HEK293 (cell line): ENCODE measurements at regions of chr15 and their contacts with region 1.

Region 1: DNA sequence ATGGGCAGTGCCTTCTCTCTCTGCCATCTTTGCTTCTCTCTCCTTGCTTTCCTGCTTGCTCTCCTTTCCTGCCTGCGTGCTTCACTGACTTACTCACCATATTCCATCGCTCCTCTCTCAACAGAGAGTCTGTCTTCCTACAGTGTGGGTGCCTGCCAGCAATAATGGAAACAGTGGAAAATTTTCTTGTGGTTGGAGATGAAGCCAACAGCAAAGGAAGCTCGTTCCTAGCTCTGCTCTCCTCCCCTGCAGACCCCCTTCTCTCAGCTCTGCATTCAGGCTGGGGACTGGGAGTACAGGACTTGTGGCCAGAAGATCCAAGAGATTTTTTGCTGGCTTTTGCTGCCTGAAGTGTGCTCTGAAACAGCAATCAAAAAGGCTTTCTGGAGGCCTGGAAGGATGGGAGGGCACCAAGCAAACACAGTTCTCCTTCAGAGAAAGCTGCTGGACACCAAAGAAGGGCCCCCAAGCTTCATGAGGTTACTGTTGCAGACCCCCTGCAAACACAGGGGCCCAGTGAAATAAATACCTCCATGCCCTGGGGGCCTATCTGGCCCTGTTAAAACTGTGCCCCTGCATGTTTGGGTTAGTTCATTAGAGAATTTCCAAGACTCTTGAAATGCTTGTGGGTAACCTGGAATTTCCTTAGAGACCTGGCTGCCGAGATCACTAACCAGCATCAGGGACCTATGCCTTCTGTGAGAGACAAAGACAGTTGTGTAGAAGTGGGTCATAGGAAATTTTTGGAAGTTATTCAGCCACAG is 149.9 kb upstream of the RASGRP1 start:
- H3K4me3 ChIP-seq: no peak overlapping the region
- H3K27ac ChIP-seq: no peak overlapping the region
- H3K4me1 ChIP-seq: no peaks in the 10 kb centered on the region
- CTCF ChIP-seq: no peak

Region 2: GRCh38 chr15:38671675-38672254 is 42.7 kb before region 1 on chr15:
- CTCF ChIA-PET with region 1: no interaction called
- POLR2A ChIA-PET with region 1: no interaction called
- H3K4me3 ChIP-seq: no peak overlapping the region
- H3K27ac ChIP-seq: no peak overlapping the region
- H3K4me1 ChIP-seq: no peaks in the 10 kb centered on the region
- CTCF ChIP-seq: no peak

Region 3: DNA sequence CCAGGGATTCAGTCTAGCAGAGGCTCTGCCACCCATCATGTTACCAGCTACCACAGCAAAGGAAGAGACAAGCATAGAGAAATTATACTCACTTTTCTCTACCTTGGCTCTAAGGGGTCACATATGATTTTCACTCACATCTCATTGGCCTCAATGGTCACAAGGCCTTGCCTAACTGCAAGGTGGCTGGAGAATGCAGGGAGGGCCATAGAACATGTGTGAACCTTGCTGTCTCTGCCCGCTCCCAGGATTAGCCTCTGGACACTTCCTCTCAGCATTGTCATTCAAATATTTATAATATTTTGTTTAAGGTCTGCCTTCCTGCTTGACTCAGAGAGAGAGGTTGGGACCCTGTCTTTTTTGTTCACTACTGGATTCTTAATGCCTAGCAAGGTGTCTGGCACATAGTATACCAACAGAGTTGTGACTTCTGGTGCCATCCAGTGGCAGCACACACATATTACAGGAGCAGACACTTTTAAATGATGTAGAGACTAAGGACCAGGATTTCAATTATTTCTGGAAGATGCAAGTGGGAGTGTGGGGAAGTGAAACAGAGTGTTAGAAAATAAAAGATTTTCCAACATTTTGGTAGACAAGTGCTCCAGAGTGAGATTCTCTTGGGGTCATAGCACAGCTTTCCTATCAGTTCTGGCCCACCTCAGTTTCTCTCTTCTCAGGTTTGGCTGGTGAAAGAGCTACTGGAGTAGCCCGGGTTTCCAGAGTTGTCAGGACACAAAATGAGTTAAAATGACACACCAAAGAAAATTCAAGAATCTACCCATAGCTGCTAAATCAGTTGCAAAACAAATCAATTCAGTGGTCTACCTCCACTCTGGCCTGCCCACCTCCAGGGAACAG is 30.9 kb before region 1 on chr15:
- CTCF ChIA-PET with region 1: no interaction called
- POLR2A ChIA-PET with region 1: no interaction called
- H3K4me3 ChIP-seq: no peak overlapping the region
- H3K27ac ChIP-seq: no peak overlapping the region
- H3K4me1 ChIP-seq: no peaks in the 10 kb centered on the region
- CTCF ChIP-seq: peak; percentile 29; the same call in 1 of the 2 replicates

Region 4: GRCh38 chr15:38699633-38700230 is 14.8 kb before region 1 on chr15:
- CTCF ChIA-PET with region 1: interaction called, 13 read pairs
- POLR2A ChIA-PET with region 1: no interaction called
- H3K4me3 ChIP-seq: no peak overlapping the region
- H3K27ac ChIP-seq: no peak overlapping the region
- H3K4me1 ChIP-seq: peaks cover 2% of the 10 kb centered on the region; the same call in 1 of the 2 replicates
- CTCF ChIP-seq: no peak

Region 5: DNA sequence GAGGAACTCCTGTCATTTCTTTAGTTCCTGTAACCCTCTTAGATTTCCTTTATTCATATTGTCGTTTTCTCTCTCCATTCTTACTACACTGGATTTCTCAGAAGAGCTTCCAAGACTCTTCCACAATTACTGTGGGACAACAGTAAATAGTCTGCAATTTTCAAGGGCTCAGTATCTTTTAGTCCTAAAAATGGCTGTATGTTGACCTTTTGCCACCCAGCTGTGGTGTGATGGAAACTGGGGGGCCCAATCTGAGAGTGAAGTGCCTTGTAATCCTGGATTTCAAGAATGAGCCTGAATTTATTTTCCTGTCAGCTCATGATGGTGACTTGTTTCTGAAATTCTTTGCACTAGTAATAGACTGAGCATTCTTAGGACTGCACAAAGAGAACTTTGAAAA is 127.7 kb after region 1 on chr15:
- CTCF ChIA-PET with region 1: no interaction called
- POLR2A ChIA-PET with region 1: no interaction called
- H3K4me3 ChIP-seq: no peak overlapping the region
- H3K27ac ChIP-seq: no peak overlapping the region
- H3K4me1 ChIP-seq: 0 out of 2 replicates have a peak, but pooled peaks cover 3% of the 10 kb centered on the region
- CTCF ChIP-seq: no peak